ENCODE measurements at regions of chr16 and their contacts with region 1.

Region 1: DNA sequence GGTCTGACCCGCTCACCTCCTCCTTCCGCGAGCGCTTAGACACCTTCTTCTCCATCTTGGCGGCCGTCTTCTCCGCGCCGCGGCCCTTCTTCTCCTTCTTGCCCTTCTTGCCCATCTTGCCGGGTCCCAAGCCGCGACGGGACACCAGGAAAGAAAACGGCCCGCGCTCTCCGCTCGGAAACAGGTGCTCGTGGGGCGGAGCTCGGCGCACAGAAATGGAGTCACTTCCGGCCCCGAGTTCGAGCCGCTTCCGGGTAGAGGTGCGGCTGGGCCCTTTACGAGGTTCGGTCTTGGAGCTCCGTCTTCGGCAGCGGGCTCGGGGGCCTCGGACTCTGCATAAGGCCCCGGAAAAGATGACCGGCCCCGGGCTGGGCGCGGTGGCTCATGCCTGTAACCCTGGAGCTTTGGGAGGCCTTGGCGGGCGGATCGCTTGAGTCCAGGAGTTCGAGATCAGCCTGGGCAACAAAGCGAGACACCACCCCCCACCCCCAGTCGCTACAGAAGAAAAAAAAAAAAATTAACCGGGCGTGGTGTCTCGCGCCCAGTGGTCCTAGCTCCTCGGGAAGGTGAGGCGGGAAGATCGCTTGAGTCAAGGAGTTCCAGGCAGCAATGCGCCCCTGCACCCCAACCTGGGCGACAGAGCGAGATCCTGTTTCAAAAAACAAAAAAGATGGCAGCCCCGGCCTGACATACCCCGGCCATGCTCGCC is at the start of gene KLHDC4:
- DNase-seq: peak; percentile 91 to 94
- ATAC-seq: peak; percentile 41 to 60 (median 41)
- H3K4me3 ChIP-seq: peak within 1 kb of the TSS; percentile 87
- H3K4me3 Mint-ChIP-seq: peak within 1 kb of the TSS; percentile 100
- H3K27ac ChIP-seq: peak within 1 kb of the TSS; percentile 96
- H3K27ac Mint-ChIP-seq: peak within 1 kb of the TSS; percentile 95 to 100
- H3K4me1 ChIP-seq: peaks cover 51% of the 10 kb centered on the region
- H3K4me1 Mint-ChIP-seq: peaks cover 53 to 58% of the 10 kb centered on the region in 2 donors
- H3K27me3 ChIP-seq: no peaks in the 10 kb centered on the region
- H3K27me3 Mint-ChIP-seq: no peaks in the 10 kb centered on the region
- CTCF ChIP-seq: no peak
- total RNA-seq, gene KLHDC4: 210 to 311 (median 210) TPM

Region 2: DNA sequence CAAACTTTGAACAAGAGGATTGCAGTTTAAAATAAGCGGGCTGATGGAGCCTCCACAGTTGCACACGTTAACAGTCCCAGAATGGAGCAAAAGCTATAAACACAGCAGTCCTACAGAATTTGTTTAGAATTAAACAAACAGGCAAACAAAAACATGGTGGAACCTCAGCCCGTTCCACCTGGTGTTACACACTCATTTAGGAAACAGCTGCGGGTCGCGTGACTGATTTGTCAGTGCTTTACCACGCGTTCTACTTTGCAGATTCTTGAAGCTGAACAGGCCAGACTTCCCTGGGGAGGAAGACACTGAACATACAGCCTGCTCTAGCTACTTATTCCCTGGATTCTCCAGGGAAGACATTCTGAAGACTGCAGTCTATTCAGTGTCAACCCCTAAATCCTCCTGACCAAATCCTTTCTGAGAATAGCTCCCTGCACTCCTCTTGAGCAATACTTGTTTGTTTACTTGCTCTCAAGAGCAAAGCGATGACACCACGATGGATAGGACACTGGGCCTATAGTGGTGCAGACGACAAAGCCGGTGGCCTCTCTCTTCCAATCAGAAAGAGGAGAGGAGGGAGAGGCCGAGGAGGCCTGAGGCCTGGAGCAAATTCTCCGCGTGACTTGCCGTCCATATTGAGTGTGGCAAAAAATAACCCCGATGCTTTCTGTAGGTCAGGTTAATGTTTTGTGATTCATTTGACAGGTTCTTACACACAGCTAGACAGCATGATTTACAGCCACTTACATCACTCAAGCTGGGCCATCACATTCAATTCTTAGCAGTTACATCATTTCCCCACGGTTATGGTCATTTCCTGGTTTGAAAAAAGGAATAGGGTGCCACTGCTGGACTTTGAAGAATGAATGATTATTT is 377.8 kb before region 1 on chr16:
- intact Hi-C with region 1: loop called (anchors 1 kb)
- DNase-seq: peak; percentile 79 to 96
- ATAC-seq: peak; percentile 64 to 83 (median 67)
- H3K4me3 ChIP-seq: peak overlapping the region; percentile 9
- H3K4me3 Mint-ChIP-seq: peak overlapping the region; percentile 61
- H3K27ac ChIP-seq: peak overlapping the region; percentile 80
- H3K27ac Mint-ChIP-seq: peak overlapping the region; percentile 95 to 97
- H3K4me1 ChIP-seq: peaks cover 33% of the 10 kb centered on the region
- H3K4me1 Mint-ChIP-seq: peaks cover 39 to 48% of the 10 kb centered on the region in 2 donors
- H3K27me3 ChIP-seq: no peaks in the 10 kb centered on the region
- H3K27me3 Mint-ChIP-seq: no peaks in the 10 kb centered on the region
- CTCF ChIP-seq: no peak

Region 3: GRCh38 chr16:87550496-87550961 is 215.4 kb before region 1 on chr16:
- intact Hi-C with region 1: loop called (anchors 1 kb)
- DNase-seq: peak; percentile 65 to 73
- ATAC-seq: peak in 2 of 3 donors; percentile 68 to 80
- H3K4me3 ChIP-seq: no peak overlapping the region
- H3K4me3 Mint-ChIP-seq: no peak overlapping the region
- H3K27ac ChIP-seq: no peak overlapping the region
- H3K27ac Mint-ChIP-seq: no peak overlapping the region
- H3K4me1 ChIP-seq: peaks cover 5% of the 10 kb centered on the region
- H3K4me1 Mint-ChIP-seq: peaks cover 0 to 13% of the 10 kb centered on the region in 2 donors
- H3K27me3 ChIP-seq: no peaks in the 10 kb centered on the region
- H3K27me3 Mint-ChIP-seq: peaks cover 19 to 21% of the 10 kb centered on the region in 2 donors
- CTCF ChIP-seq: peak; percentile 95

Region 4: GRCh38 chr16:87636072-87636684 is 129.8 kb before region 1 on chr16:
- intact Hi-C with region 1: loop called (anchors 2 kb)
- DNase-seq: peak; percentile 65 to 89
- ATAC-seq: peak; percentile 77 to 90 (median 87)
- H3K4me3 ChIP-seq: peak overlapping the region; percentile 35
- H3K4me3 Mint-ChIP-seq: peak overlapping the region; percentile 85
- H3K27ac ChIP-seq: peak overlapping the region; percentile 58
- H3K27ac Mint-ChIP-seq: peak overlapping the region; percentile 26 to 58
- H3K4me1 ChIP-seq: peaks cover 21% of the 10 kb centered on the region
- H3K4me1 Mint-ChIP-seq: peaks cover 0 to 26% of the 10 kb centered on the region in 2 donors
- H3K27me3 ChIP-seq: no peaks in the 10 kb centered on the region
- H3K27me3 Mint-ChIP-seq: peaks cover 9 to 14% of the 10 kb centered on the region in 2 donors
- CTCF ChIP-seq: peak; percentile 47

Region 5: GRCh38 chr16:87675131-87675700 is 90.7 kb before region 1 on chr16:
- intact Hi-C with region 1: no loop called
- DNase-seq: no peak
- ATAC-seq: no peak
- H3K4me3 ChIP-seq: no peak overlapping the region
- H3K4me3 Mint-ChIP-seq: no peak overlapping the region
- H3K27ac ChIP-seq: no peak overlapping the region
- H3K27ac Mint-ChIP-seq: no peak overlapping the region
- H3K4me1 ChIP-seq: peaks cover 3% of the 10 kb centered on the region
- H3K4me1 Mint-ChIP-seq: peaks cover 0 to 4% of the 10 kb centered on the region in 2 donors
- H3K27me3 ChIP-seq: no peaks in the 10 kb centered on the region
- H3K27me3 Mint-ChIP-seq: no peaks in the 10 kb centered on the region
- CTCF ChIP-seq: no peak

Region 6: DNA sequence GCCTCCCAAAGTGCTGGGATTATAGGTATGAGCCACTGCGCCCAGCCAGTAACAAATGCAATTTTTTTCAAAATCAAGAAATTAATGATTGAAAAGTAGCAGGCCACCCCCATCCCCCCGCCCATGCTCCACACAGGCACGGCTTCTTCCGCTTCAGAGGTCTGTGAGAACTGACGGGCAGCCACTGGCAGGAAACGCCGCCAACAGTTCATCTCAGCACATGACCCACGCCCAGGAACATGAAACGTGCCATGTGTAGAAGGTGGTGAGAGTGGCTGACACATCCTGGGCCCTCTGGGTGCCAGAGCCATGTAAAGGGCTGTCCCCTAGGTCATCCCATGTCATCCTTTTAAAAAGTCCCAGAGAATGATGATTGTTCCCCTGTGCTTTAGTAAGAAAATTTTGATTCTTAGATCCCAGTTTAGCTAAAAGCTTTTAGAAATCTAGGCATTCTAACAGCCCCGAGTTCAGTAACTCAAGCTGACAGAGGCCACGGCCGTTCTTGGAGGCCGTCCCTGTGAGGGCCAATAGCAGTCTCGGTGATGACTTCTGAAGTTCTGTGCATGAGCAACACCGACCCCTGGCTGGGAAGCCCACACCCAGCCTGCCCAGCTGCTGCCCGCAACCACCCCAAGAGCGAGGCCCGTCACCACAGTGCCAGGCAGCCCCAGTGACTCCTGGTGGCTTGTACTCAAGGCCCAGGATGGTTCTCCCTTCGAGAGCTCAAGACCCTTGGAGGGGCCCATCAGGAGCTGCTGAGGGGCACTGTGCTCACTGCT is 52.3 kb before region 1 on chr16:
- intact Hi-C with region 1: loop called (anchors 1 kb)
- DNase-seq: peak; percentile 67 to 75
- ATAC-seq: peak; percentile 90 to 93 (median 91)
- H3K4me3 ChIP-seq: no peak overlapping the region
- H3K4me3 Mint-ChIP-seq: peak overlapping the region; percentile 68
- H3K27ac ChIP-seq: peak overlapping the region; percentile 87
- H3K27ac Mint-ChIP-seq: peak overlapping the region; percentile 91 to 96
- H3K4me1 ChIP-seq: peaks cover 35% of the 10 kb centered on the region
- H3K4me1 Mint-ChIP-seq: peaks cover 42 to 46% of the 10 kb centered on the region in 2 donors
- H3K27me3 ChIP-seq: no peaks in the 10 kb centered on the region
- H3K27me3 Mint-ChIP-seq: no peaks in the 10 kb centered on the region
- CTCF ChIP-seq: no peak

Region 7: DNA sequence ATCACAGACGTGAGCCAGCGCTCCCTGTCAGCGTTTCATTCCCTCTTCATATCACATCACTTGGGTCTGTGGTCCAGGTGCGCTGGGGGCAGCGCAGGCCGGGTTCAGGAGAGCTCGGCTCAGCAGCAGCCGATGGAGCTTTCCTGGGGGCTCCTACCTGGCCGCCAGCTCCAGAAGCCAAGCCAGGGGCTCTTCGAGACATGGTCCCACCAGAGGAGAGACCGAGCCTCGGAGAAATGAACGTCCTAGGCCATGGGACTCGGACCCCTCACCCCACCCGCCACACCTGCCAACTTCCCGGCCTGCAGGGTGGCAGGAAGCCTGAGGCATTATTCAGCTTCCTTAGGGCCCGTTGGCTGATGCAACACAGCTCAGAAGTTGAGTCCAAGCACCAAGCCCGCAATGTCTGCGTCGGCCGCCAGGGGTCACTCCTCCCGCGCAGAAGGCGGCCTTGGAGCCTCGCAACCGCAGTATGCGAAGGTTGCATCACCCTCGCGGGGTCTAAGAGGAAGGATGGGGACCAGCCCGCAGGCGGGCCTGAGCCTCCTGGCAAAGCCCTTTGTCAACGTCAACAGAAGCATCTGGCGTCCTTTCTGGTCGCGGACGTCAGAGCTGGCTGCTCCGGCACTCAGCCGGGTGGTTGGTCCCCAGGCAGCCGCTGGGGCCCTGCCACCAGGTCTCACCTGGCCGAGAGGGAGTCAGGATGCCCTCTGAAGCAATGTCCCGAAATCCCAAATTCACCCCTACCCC is 13.1 kb after region 1 on chr16:
- intact Hi-C with region 1: loop called (anchors 1 kb)
- DNase-seq: peak; percentile 92 to 96
- ATAC-seq: peak; percentile 90 to 97 (median 91)
- H3K4me3 ChIP-seq: no peak overlapping the region
- H3K4me3 Mint-ChIP-seq: peak overlapping the region; percentile 75
- H3K27ac ChIP-seq: peak overlapping the region; percentile 7
- H3K27ac Mint-ChIP-seq: peak overlapping the region; percentile 85 to 90
- H3K4me1 ChIP-seq: peaks cover 44% of the 10 kb centered on the region
- H3K4me1 Mint-ChIP-seq: peaks cover 20 to 29% of the 10 kb centered on the region in 2 donors
- H3K27me3 ChIP-seq: no peaks in the 10 kb centered on the region
- H3K27me3 Mint-ChIP-seq: no peaks in the 10 kb centered on the region
- CTCF ChIP-seq: peak; percentile 90

Region 8: DNA sequence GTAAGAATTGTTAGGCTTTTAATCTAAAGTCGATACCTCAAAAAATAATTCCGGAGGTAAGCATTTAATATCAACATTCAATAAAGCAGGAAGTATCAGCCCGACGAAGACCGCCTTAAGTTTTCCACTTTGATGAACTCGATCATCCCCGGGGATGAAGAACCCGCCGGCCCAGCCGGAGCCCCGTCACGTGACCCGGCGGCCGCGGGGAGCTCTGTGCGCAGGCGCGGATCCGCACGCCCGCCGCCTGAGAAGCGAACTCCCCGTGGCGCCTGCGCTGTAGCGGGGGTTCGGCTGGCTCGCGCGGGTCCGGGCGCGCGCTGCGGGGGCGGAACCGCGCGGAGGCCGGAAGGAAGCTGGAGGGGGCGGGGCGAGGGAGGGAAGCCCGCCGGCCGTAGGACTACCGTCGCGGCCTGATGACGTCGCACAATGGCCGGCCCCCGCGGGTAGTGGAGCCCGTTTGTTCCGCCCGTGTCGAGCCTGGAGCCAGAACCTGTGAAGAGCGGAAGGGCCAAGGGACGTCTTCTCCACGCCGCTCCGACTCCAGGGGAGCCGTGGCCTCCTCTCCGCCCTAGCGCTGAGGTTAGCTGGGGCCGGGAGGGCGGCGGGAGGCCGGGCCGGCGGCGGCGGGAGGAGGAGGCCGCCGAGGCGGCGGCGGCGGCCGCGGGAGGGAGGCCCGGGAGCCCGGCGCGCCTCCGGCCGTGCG is 804.2 kb after region 1 on chr16 and contains the start of gene ZC3H18:
- intact Hi-C with region 1: loop called (anchors 2 kb)
- DNase-seq: peak; percentile 98 to 100
- ATAC-seq: peak; percentile 93 to 98 (median 94)
- H3K4me3 ChIP-seq: peak within 1 kb of the TSS; percentile 70
- H3K4me3 Mint-ChIP-seq: peak within 1 kb of the TSS; percentile 86
- H3K27ac ChIP-seq: peak within 1 kb of the TSS; percentile 77
- H3K27ac Mint-ChIP-seq: peak within 1 kb of the TSS; percentile 84 to 87
- H3K4me1 ChIP-seq: peaks cover 18% of the 10 kb centered on the region
- H3K4me1 Mint-ChIP-seq: peaks cover 25 to 36% of the 10 kb centered on the region in 2 donors
- H3K27me3 ChIP-seq: no peaks in the 10 kb centered on the region
- H3K27me3 Mint-ChIP-seq: no peaks in the 10 kb centered on the region
- CTCF ChIP-seq: no peak
- total RNA-seq, gene ZC3H18: 125 to 130 (median 126) TPM